ENCODE measurements at regions of chr15 and their contacts with region 1.

Region 1: GRCh38 chr15:60397772-60398445 is at the start of gene ANXA2:
- DNase-seq: peak; percentile 91
- ATAC-seq: peak; percentile 33
- H3K4me3 ChIP-seq: peak within 1 kb of the TSS; percentile 93
- H3K27ac ChIP-seq: peak within 1 kb of the TSS; percentile 98
- H3K4me1 ChIP-seq: peaks cover 66% of the 10 kb centered on the region
- H3K27me3 ChIP-seq: no peaks in the 10 kb centered on the region
- CTCF ChIP-seq: no peak
- total RNA-seq, gene ANXA2: 2,114 and 2,202 TPM in 2 replicates

Region 2: GRCh38 chr15:59991834-59992233 is 406.1 kb before region 1 on chr15:
- CTCF ChIA-PET with region 1: no interaction called
- POLR2A ChIA-PET with region 1: no interaction called
- intact Hi-C with region 1: no loop called
- DNase-seq: no peak
- ATAC-seq: no peak
- H3K4me3 ChIP-seq: no peak overlapping the region
- H3K27ac ChIP-seq: no peak overlapping the region
- H3K4me1 ChIP-seq: no peaks in the 10 kb centered on the region
- H3K27me3 ChIP-seq: peaks cover 67% of the 10 kb centered on the region
- CTCF ChIP-seq: no peak

Region 3: DNA sequence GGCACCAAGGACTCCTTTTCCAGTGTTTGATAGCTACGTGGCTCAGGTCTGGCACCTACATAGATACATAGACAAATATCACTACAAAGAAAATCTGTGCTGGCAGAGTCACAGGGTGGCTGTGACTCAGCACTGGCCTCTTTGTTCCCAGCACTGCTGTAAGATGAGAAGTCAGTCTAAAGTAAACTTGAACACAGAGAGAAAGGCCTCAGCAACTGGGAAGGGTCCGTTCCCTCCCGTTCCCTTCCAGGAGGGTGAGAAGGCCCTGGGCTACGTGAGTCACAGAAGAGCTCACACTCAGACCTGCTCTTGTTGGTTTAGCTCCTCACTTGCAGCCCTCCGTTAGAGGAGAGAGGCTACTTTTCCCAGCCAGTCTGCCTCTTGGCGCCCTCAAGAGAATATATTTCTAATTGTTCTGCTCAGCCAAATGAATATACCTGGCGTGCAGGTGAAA is 23.3 kb before region 1 on chr15:
- CTCF ChIA-PET with region 1: no interaction called
- POLR2A ChIA-PET with region 1: interaction called, 15 read pairs
- intact Hi-C with region 1: loop called (anchors 1 kb)
- DNase-seq: peak; percentile 97
- ATAC-seq: peak; percentile 77
- H3K4me3 ChIP-seq: peak overlapping the region; percentile 38; the same call in 1 of the 2 replicates
- H3K27ac ChIP-seq: peak overlapping the region; percentile 98
- H3K4me1 ChIP-seq: peaks cover 91% of the 10 kb centered on the region
- H3K27me3 ChIP-seq: no peaks in the 10 kb centered on the region
- CTCF ChIP-seq: peak; percentile 34; the same call in 1 of the 2 replicates

Region 4: DNA sequence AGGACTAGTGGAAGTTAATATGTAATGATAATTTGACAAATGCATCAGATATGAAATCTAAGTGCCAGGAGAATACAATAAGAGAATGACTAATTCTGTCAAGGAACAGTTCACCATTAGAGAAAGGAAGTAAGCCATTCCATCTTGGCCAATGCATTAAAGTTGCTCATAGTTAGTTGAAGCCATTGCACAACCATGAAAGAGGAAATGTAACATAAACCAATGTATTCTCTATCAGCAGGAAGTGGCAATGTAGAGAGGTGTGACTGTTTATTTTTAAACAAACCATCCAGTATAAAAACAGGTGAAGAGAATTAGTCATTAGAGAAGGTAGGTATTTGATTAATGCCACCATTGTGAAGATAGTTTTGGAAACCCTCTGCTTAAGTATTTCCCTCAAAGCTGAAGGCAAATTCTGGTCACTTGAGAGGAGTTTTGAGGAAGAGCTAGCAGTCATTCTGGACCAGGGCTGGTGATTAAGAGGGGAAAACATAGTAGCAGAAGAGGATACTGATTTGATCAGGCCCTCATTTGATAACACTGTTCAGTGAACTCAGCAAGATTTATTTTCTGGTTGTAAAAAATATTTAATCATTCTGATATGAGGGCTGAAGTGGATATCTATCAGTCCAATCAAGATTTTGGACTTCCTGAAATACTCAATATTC is 10.7 kb after region 1 on chr15:
- CTCF ChIA-PET with region 1: interaction called, 3 read pairs
- POLR2A ChIA-PET with region 1: interaction called, 12 read pairs
- intact Hi-C with region 1: loop called (anchors 1 kb)
- DNase-seq: peak; percentile 94
- ATAC-seq: peak; percentile 76
- H3K4me3 ChIP-seq: peak overlapping the region; percentile 50; the same call in 1 of the 2 replicates
- H3K27ac ChIP-seq: peak overlapping the region; percentile 97
- H3K4me1 ChIP-seq: peaks cover 53% of the 10 kb centered on the region
- H3K27me3 ChIP-seq: no peaks in the 10 kb centered on the region
- CTCF ChIP-seq: no peak

Region 5: GRCh38 chr15:60423537-60423936 is 25.6 kb after region 1 on chr15:
- CTCF ChIA-PET with region 1: no interaction called
- POLR2A ChIA-PET with region 1: interaction called, 9 read pairs
- intact Hi-C with region 1: loop called (anchors 2 kb)
- DNase-seq: peak; percentile 88
- ATAC-seq: peak; percentile 60
- H3K4me3 ChIP-seq: no peak overlapping the region
- H3K27ac ChIP-seq: peak overlapping the region; percentile 18; the same call in 1 of the 2 replicates
- H3K4me1 ChIP-seq: peaks cover 57% of the 10 kb centered on the region
- H3K27me3 ChIP-seq: no peaks in the 10 kb centered on the region
- CTCF ChIP-seq: no peak

Region 6: GRCh38 chr15:60444289-60444912 is 46.5 kb after region 1 on chr15:
- CTCF ChIA-PET with region 1: interaction called, 3 read pairs
- POLR2A ChIA-PET with region 1: interaction called, 6 read pairs
- intact Hi-C with region 1: loop called (anchors 1 kb)
- DNase-seq: peak; percentile 45
- ATAC-seq: peak; percentile 40; the same call in 1 of the 2 replicates
- H3K4me3 ChIP-seq: no peak overlapping the region
- H3K27ac ChIP-seq: no peak overlapping the region
- H3K4me1 ChIP-seq: peaks cover 15% of the 10 kb centered on the region
- H3K27me3 ChIP-seq: no peaks in the 10 kb centered on the region
- CTCF ChIP-seq: peak; percentile 66

Region 7: DNA sequence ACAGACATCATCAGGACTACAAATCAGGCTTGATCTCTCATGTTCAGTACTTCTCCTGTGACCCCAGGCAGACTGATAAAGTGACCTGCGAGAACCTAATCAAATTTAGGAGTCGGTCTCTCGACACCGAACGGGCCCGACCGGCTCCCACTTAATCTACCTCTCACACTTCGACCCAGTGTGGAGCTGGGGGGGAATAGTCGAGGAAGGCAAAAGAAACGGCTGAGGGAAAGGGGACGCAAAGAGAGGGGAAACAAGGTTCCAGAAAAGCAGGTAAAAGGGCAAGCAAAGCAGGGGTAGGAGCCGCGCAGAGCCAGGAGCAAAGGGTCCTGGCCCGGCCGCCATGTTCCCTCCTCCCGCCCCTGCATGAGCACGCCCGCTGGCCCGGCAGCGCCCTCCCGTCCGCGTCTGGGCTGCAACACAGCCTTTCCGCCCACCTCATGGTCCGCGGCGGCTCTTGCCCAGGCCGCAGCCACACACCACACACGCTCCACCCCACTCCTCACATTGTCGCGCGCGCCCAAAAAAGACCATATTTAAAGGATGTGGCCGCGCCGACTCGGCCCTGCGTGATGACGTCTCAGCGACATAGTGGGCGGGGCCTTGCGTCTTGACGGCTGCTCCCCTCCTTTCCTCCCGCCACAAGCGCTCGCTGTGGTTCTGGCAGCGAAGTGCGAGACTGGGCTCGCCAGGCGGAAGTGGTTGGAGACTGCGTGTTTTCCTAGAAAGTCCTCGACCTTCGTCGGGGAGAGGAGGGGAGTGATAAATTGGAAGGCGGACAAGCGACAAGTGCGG is 80.9 kb after region 1 on chr15 and contains the start of gene ICE2:
- CTCF ChIA-PET with region 1: no interaction called
- POLR2A ChIA-PET with region 1: interaction called, 35 read pairs
- intact Hi-C with region 1: no loop called
- DNase-seq: peak; percentile 89
- ATAC-seq: peak; percentile 87
- H3K4me3 ChIP-seq: peak within 1 kb of the TSS; percentile 96
- H3K27ac ChIP-seq: peak within 1 kb of the TSS; percentile 82
- H3K4me1 ChIP-seq: peaks cover 33% of the 10 kb centered on the region
- H3K27me3 ChIP-seq: no peaks in the 10 kb centered on the region
- CTCF ChIP-seq: no peak
- total RNA-seq, gene ICE2: 14.8 and 23.7 TPM in 2 replicates

Region 8: GRCh38 chr15:60520825-60521368 is 123.0 kb after region 1 on chr15:
- CTCF ChIA-PET with region 1: no interaction called
- POLR2A ChIA-PET with region 1: no interaction called
- intact Hi-C with region 1: loop called (anchors 10 kb)
- DNase-seq: peak; percentile 74
- ATAC-seq: peak; percentile 51
- H3K4me3 ChIP-seq: 0 out of 2 replicates have a peak overlapping the region, but pooled peaks have one; percentile 46
- H3K27ac ChIP-seq: peak overlapping the region; percentile 98
- H3K4me1 ChIP-seq: peaks cover 60% of the 10 kb centered on the region
- H3K27me3 ChIP-seq: no peaks in the 10 kb centered on the region
- CTCF ChIP-seq: peak; percentile 91

Measured in PC-3 (cell line).